Heart left ventricle (tissue), 16 donors: ENCODE measurements at regions of chr17 and their contacts with region 1.

Region 1: GRCh38 chr17:27593232-27593856 is 37.6 kb upstream of the LGALS9 start:
- DNase-seq: no peak
- ATAC-seq: no peak
- H3K4me3 ChIP-seq: no peak overlapping the region
- H3K27ac ChIP-seq: no peak overlapping the region
- H3K4me1 ChIP-seq: peaks cover 0 to 6% (median 0%) of the 10 kb centered on the region in 12 donors
- H3K27me3 ChIP-seq: no peaks in the 10 kb centered on the region
- CTCF ChIP-seq: no peak
- POLR2A ChIP-seq: no peak

Region 2: GRCh38 chr17:27407916-27408846 is 185.2 kb before region 1 on chr17:
- intact Hi-C with region 1: no loop called
- DNase-seq: no peak
- ATAC-seq: peak in 1 of 4 donors; percentile 49
- H3K4me3 ChIP-seq: no peak overlapping the region
- H3K27ac ChIP-seq: no peak overlapping the region
- H3K4me1 ChIP-seq: peaks cover 0 to 19% (median 7%) of the 10 kb centered on the region in 12 donors
- H3K27me3 ChIP-seq: no peaks in the 10 kb centered on the region
- CTCF ChIP-seq: no peak
- POLR2A ChIP-seq: no peak

Region 3: GRCh38 chr17:27481327-27481726 is 112.0 kb before region 1 on chr17:
- intact Hi-C with region 1: loop called in 1 of 10 experiments (anchors 2 kb)
- DNase-seq: no peak
- ATAC-seq: no peak
- H3K4me3 ChIP-seq: no peak overlapping the region
- H3K27ac ChIP-seq: no peak overlapping the region
- H3K4me1 ChIP-seq: peaks cover 0 to 42% (median 10%) of the 10 kb centered on the region in 12 donors
- H3K27me3 ChIP-seq: no peaks in the 10 kb centered on the region
- CTCF ChIP-seq: no peak
- POLR2A ChIP-seq: no peak